Ascending aorta (tissue), 2 donors: ENCODE measurements at regions of chr13 and their contacts with region 1.

Region 1: DNA sequence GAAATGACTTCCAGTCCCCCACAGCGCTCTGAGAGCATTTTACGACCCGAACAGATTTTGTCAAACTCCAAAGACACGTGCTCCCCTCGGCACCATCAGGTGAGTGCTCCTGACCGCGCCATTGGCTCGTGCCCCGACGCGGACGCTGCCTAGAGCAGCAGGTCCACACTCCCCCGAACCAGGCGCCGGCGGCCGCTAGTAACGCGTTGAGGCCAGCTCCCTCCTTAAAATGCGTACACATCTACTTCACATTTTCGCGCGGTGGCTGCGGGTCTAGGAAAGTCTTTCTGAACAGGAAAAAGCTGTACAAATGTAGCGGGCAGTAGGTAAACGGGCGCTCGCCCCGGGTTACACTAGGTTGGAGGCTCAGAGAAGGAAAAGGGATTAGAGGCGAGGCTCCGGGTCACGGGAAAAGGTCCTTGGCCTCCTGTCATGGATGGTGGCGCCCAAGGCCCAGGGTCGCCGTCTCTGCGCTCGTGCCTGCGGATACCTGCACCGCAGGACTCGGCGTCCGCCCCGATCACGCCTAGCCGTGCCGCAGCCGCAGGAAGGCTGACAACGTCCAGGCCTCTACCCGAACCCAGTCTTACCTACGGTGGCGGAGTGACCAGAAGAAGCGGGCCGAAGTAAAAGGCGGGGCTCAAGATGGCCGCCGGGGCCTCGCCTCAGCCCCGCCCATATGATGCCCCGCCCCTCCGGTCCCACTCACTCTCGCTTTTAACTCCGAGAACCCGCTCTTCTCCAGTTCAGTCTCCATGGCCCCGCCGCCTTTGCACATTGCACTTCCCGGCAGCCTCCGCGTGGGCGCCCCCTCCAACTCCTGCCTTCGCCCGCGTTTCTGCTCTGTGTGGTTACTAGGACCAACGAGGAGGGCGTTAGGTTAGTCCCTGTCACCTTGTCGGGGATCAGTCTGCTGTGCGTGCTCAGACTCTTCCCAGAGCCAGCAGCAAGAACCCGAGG is at the start of gene ESD:
- DNase-seq: peak; percentile 66 to 97
- H3K4me3 ChIP-seq: peak within 1 kb of the TSS; percentile 77 to 86
- H3K27ac ChIP-seq: peak within 1 kb of the TSS; percentile 92
- H3K4me1 ChIP-seq: peaks cover 10 to 33% of the 10 kb centered on the region in 2 donors
- H3K27me3 ChIP-seq: no peaks in the 10 kb centered on the region
- CTCF ChIP-seq: no peak
- total RNA-seq, gene ESD: 58.0 TPM

Region 2: GRCh38 chr13:46492946-46493345 is 303.8 kb before region 1 on chr13:
- intact Hi-C with region 1: loop called (anchors 2 kb)
- DNase-seq: no peak
- H3K4me3 ChIP-seq: no peak overlapping the region
- H3K27ac ChIP-seq: peak overlapping the region in 1 of 2 donors; percentile 32
- H3K4me1 ChIP-seq: peaks cover 5 to 23% of the 10 kb centered on the region in 2 donors
- H3K27me3 ChIP-seq: no peaks in the 10 kb centered on the region
- CTCF ChIP-seq: peak; percentile 42 to 72 (median 60)

Region 3: GRCh38 chr13:46759846-46760245 is 36.9 kb before region 1 on chr13:
- intact Hi-C with region 1: loop called (anchors 5 kb)
- DNase-seq: no peak
- H3K4me3 ChIP-seq: no peak overlapping the region
- H3K27ac ChIP-seq: peak overlapping the region; percentile 62 to 83
- H3K4me1 ChIP-seq: peaks cover 7 to 19% of the 10 kb centered on the region in 2 donors
- H3K27me3 ChIP-seq: no peaks in the 10 kb centered on the region
- CTCF ChIP-seq: no peak

Region 4: GRCh38 chr13:46893798-46894560 is 97.2 kb after region 1 on chr13:
- intact Hi-C with region 1: loop called (anchors 1 kb)
- DNase-seq: peak in 1 of 2 donors; percentile 84
- H3K4me3 ChIP-seq: peak overlapping the region; percentile 58 to 82
- H3K27ac ChIP-seq: peak overlapping the region; percentile 71 to 89
- H3K4me1 ChIP-seq: peaks cover 0 to 3% of the 10 kb centered on the region in 2 donors
- H3K27me3 ChIP-seq: no peaks in the 10 kb centered on the region
- CTCF ChIP-seq: peak; percentile 84 to 100 (median 96)

Region 5: GRCh38 chr13:47190696-47191305 is 394.0 kb after region 1 on chr13:
- intact Hi-C with region 1: no loop called
- DNase-seq: no peak
- H3K4me3 ChIP-seq: no peak overlapping the region
- H3K27ac ChIP-seq: no peak overlapping the region
- H3K4me1 ChIP-seq: no peaks in the 10 kb centered on the region
- H3K27me3 ChIP-seq: no peaks in the 10 kb centered on the region
- CTCF ChIP-seq: no peak